Activated B cell treated with CpG ODN at 0.5 μM for 24 hours (primary cell): ENCODE measurements at regions of chr21 and their contacts with region 1.

Region 1: DNA sequence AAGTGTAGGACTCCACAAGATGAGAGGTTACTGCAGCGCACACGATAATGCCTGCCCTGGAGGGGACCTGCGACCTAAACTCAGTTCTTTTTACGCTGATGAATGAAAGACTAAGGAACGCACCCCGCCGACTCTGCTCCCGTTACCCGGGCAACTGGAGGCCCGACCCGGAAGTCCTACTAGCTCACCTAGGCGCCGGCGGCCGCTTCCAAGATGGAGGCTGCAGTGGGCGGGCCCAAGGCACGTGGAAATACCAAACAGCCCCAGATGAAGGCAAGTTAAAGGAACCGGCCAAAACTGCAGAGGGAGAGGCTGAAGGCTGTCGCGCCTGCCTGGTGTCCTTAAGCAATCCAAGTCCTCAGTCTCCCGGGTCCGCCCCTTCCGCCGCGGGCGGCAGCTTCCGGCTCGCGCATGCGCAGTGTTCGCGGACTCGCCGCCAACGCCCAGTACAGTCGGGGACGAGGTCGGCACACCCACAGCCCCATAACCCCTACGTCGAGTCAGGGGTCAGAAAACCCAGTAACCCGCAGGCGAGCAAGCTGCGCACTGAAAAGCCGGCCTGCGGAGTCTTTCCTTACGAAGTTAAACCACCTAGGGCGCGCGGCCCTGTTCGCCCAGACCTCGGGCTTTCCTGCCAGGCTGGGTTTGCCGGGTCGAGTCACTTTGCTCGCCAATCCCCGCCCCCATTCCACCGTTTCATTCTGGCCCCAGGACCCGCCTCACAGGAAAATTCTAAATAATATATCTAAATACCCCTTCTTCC is at the start of gene SETD4:
- DNase-seq: peak; percentile 96
- ATAC-seq: peak; percentile 89
- H3K4me3 Mint-ChIP-seq: peak within 1 kb of the TSS; percentile 95
- H3K27ac Mint-ChIP-seq: peak within 1 kb of the TSS; percentile 96
- H3K4me1 Mint-ChIP-seq: peaks cover 20% of the 10 kb centered on the region
- H3K27me3 Mint-ChIP-seq: no peaks in the 10 kb centered on the region
- CTCF ChIP-seq: no peak
- total RNA-seq, gene SETD4: 31.6 and 40.4 TPM in 2 replicates

Region 2: DNA sequence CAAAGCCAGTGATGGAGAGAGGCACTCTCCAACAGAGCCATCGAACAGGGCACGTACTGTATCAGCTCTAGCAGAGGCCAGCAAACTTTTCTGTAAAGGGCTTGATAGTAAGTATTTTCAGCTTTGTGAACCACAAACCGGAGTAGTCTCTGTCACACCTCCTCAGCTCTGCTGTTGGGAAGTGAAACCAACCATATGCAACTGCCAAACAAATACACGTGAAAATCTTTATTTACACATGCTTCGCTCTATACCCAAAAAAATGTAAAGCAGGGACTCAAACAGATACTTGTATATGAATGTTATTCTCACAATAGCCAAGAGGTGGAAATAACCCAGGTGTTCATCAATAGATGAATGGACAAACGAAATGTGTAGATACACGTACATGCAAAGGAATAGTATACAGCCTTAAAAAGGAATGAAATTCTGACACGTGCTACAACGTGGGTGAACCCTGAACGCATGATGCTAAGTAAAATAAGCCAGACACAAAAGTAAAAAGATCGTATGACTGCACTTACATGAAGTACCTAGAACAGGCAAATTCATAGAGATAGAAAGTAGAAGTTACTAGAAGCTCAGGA is 39.0 kb before region 1 on chr21:
- CTCF ChIA-PET with region 1: no interaction called
- POLR2A ChIA-PET with region 1: no interaction called
- intact Hi-C with region 1: no loop called
- DNase-seq: no peak
- ATAC-seq: peak; percentile 7
- H3K4me3 Mint-ChIP-seq: no peak overlapping the region
- H3K27ac Mint-ChIP-seq: no peak overlapping the region
- H3K4me1 Mint-ChIP-seq: peaks cover 19% of the 10 kb centered on the region
- H3K27me3 Mint-ChIP-seq: peaks cover 6% of the 10 kb centered on the region
- CTCF ChIP-seq: no peak

Region 3: DNA sequence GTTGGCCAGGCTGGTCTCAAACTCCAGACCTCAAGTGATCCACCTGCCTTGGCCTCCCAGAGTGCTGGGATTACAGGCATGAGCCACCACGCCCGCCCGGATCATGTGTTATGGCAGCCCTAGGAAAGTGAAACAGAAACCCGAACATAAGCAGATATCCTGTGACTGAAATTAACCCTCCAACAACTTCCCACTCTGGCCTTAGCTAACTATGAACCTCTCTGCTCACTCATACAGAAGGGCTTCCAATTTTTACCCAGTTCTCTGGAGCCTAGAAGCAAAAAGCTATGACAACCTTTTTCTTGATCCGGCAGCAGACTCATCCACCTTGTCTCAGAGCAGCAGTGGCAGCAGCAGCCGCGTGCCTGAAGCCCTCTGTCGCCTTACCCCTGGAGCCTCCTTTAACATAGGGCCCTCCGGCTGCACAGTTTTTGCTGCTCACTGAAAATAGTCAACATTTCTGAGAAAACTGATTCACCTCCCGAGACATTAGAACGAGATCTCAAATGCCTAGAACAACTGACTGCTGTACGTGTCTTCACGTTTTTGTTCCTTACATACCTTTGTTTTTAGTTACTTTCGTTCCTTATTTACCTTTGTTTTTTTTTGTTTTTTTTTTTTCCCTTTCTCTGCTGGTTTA is 18.8 kb after region 1 on chr21:
- CTCF ChIA-PET with region 1: no interaction called
- POLR2A ChIA-PET with region 1: interaction called, 19 read pairs
- intact Hi-C with region 1: loop called (anchors 2 kb)
- DNase-seq: no peak
- ATAC-seq: peak; percentile 81
- H3K4me3 Mint-ChIP-seq: peak overlapping the region; percentile 66
- H3K27ac Mint-ChIP-seq: peak overlapping the region; percentile 82
- H3K4me1 Mint-ChIP-seq: peaks cover 34% of the 10 kb centered on the region
- H3K27me3 Mint-ChIP-seq: no peaks in the 10 kb centered on the region
- CTCF ChIP-seq: no peak

Region 4: GRCh38 chr21:36104317-36105300 is 44.3 kb after region 1 on chr21:
- CTCF ChIA-PET with region 1: interaction called, 12 read pairs
- POLR2A ChIA-PET with region 1: interaction called, 9 read pairs
- intact Hi-C with region 1: loop called (anchors 1 kb)
- DNase-seq: peak; percentile 64
- ATAC-seq: peak; percentile 83
- H3K4me3 Mint-ChIP-seq: peak overlapping the region; percentile 39
- H3K27ac Mint-ChIP-seq: peak overlapping the region; percentile 20
- H3K4me1 Mint-ChIP-seq: peaks cover 10% of the 10 kb centered on the region
- H3K27me3 Mint-ChIP-seq: peaks cover 22% of the 10 kb centered on the region
- CTCF ChIP-seq: no peak

Region 5: DNA sequence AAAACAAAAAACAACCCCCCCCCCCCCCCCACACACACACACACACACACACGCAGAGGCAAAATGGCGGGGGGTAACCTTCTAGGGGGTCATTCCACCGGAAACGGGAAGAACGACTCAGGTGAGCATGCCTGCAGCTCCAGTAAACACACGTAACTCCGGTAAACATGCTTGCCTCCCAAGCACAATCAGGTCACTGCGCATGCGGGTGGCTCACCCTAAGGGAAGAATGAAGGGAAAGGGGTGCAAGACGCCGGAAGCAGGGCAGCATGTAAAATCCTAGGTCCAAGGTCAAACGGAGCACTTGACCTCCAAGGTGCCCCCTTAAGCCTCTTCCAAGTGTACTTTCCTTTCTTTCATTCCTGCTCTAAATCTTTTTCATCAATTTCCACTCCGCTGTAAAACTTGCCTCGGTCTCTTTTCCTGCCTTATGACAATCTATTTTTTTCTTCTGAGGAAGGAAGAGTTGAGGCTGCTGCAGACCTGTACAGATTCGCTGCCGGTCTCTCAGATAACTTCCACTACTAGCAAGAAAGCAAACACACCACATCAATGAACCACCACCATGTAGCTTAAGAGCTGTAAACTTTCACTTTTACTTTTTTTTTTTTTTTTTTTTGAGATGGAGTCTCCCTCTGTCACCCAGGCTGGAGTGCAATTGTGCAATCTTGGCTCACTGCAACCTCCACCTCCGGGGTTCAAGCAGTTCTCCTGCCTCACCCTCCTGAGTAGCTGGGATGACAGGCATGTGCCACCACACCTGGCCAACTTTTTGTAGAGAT is 53.5 kb after region 1 on chr21:
- CTCF ChIA-PET with region 1: interaction called, 5 read pairs
- POLR2A ChIA-PET with region 1: interaction called, 14 read pairs
- intact Hi-C with region 1: loop called (anchors 2 kb)
- DNase-seq: no peak
- ATAC-seq: no peak
- H3K4me3 Mint-ChIP-seq: peak overlapping the region; percentile 75
- H3K27ac Mint-ChIP-seq: peak overlapping the region; percentile 80
- H3K4me1 Mint-ChIP-seq: peaks cover 30% of the 10 kb centered on the region
- H3K27me3 Mint-ChIP-seq: no peaks in the 10 kb centered on the region
- CTCF ChIP-seq: no peak